Heart right ventricle (tissue), 16 donors: ENCODE measurements at regions of chr16 and their contacts with region 1.

Region 1: DNA sequence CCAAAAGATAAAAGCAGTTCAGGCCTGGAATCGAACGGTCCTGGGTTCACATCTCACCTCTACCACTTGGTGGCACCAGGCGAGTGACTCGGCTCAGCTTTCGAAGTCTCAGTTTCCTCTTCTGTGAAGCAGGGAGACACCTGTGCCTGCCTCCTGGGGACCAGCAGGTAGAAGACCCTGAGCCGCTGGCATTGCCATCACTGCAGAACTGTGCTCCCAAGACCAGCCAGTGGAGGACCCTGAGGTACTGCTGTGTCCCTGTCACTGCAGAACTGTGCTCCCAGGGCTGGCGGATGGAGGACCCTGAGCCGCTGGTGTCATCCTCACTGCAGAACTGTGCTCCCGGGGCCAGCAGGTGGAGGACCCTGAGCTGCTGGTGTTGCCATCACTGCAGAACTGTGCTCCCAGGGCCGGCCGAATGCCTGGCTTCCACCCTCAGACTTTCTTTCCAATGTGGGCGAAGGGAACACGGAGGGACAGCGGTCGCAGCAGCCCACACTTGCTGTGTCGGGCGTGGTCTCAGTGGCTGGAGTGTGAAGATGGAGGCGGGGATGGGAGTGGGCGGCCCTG is 8.7 kb upstream of the SLC7A5 start:
- DNase-seq: no peak
- ATAC-seq: peak in 3 of 8 donors; percentile 10 to 35 (median 21)
- H3K4me3 ChIP-seq: no peak overlapping the region
- H3K27ac ChIP-seq: no peak overlapping the region
- H3K4me1 ChIP-seq: peaks cover 0 to 11% (median 0%) of the 10 kb centered on the region in 9 donors
- H3K27me3 ChIP-seq: peaks cover 0 to 32% (median 18%) of the 10 kb centered on the region in 7 donors
- CTCF ChIP-seq: peak in 4 of 9 donors; percentile 6 to 23 (median 18)

Region 2: DNA sequence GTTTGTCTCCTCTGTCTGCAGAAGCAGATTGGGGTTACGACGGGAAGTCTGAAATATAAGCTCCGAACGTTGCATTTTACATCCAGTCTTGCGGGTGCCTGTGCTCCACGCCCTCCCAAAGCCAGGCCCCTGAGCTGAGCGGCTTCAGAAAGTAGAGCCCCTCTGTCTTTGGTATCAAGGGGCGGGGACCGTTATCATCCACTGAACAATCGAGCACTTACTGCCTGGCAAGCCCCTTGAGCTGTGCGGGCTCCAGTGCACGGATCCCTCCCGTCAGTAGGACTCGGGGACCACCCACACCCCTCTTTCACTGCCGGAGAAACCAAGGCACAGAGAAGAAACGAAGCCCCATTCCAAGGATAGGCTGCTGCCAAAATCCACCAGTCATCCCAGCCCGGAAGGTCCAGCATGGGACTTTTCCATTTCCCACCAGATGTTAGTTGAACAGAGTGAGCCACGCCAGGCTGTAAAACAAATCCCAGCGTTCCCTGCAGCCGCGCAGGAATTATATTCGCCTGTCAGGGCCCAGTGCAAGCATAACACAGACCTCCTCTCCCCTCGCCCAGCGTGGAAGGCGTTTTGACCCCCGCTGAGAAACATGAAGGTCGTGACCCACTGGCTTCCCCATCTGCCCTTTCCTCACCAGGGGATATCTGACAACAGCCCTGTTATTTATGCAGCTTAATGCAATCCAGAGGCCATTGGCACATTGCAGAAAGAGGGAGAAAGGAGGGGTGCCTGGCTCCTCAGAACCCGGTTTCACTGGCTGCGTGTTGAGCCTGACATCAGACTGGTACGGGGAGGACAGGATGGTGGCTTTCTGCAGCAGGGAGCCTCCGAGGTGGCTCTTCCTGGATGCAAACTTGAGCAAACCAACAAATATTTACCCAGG is 1579.9 kb before region 1 on chr16:
- intact Hi-C with region 1: loop called in 1 of 10 experiments (anchors 5 kb)
- DNase-seq: no peak
- ATAC-seq: no peak
- H3K4me3 ChIP-seq: peak overlapping the region in 1 of 10 donors; percentile 11
- H3K27ac ChIP-seq: no peak overlapping the region
- H3K4me1 ChIP-seq: peaks cover 0 to 13% (median 0%) of the 10 kb centered on the region in 9 donors
- H3K27me3 ChIP-seq: peaks cover 23 to 100% (median 99%) of the 10 kb centered on the region in 7 donors
- CTCF ChIP-seq: no peak

Region 3: GRCh38 chr16:87806013-87806602 is 71.9 kb before region 1 on chr16:
- intact Hi-C with region 1: no loop called
- DNase-seq: no peak
- ATAC-seq: peak in 4 of 8 donors; percentile 5 to 16 (median 10)
- H3K4me3 ChIP-seq: peak overlapping the region in 9 of 10 donors; percentile 24 to 58 (median 54)
- H3K27ac ChIP-seq: peak overlapping the region in 7 of 10 donors; percentile 55 to 79 (median 73)
- H3K4me1 ChIP-seq: peaks cover 0 to 25% (median 14%) of the 10 kb centered on the region in 9 donors
- H3K27me3 ChIP-seq: peaks cover 0 to 13% (median 5%) of the 10 kb centered on the region in 7 donors
- CTCF ChIP-seq: no peak